Activated CD4-positive, alpha-beta memory T cell treated with anti-CD3 and anti-CD28 coated beads for 36 hours (primary cell): ENCODE measurements at regions of chr17 and their contacts with region 1.

Region 1: DNA sequence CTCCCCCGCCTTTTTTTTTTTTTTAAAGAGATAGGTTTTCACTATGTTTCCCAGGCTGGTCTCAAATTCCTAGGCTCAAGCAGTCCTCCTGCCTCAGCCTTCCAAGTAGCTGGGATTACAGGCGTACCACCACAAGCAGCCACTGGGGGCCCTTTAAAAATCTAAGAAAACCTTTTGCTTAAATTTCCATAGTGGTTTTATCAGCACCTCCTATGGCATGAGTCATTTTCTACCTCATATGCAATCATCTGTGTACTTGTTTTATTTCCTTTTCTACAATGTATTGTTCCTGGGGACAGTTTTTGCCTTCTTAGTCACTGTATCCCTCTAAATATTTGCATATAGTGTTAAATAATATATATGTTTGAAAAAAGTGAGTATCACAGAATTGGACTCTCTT is 29.2 kb downstream of the GNA13 start:
- DNase-seq: peak; percentile 75
- H3K4me3 Mint-ChIP-seq: peak overlapping the region; percentile 62
- H3K27ac Mint-ChIP-seq: peak overlapping the region; percentile 96
- H3K4me1 Mint-ChIP-seq: peaks cover 83% of the 10 kb centered on the region
- H3K27me3 Mint-ChIP-seq: no peaks in the 10 kb centered on the region

Region 2: GRCh38 chr17:64975329-64976087 is 51.8 kb before region 1 on chr17:
- CTCF ChIA-PET with region 1: interaction called, 3 read pairs
- POLR2A ChIA-PET with region 1: interaction called, 5 read pairs
- intact Hi-C with region 1: loop called (anchors 1 kb)
- DNase-seq: peak; percentile 97
- H3K4me3 Mint-ChIP-seq: peak overlapping the region; percentile 82
- H3K27ac Mint-ChIP-seq: peak overlapping the region; percentile 100
- H3K4me1 Mint-ChIP-seq: peaks cover 55% of the 10 kb centered on the region
- H3K27me3 Mint-ChIP-seq: no peaks in the 10 kb centered on the region

Region 3: DNA sequence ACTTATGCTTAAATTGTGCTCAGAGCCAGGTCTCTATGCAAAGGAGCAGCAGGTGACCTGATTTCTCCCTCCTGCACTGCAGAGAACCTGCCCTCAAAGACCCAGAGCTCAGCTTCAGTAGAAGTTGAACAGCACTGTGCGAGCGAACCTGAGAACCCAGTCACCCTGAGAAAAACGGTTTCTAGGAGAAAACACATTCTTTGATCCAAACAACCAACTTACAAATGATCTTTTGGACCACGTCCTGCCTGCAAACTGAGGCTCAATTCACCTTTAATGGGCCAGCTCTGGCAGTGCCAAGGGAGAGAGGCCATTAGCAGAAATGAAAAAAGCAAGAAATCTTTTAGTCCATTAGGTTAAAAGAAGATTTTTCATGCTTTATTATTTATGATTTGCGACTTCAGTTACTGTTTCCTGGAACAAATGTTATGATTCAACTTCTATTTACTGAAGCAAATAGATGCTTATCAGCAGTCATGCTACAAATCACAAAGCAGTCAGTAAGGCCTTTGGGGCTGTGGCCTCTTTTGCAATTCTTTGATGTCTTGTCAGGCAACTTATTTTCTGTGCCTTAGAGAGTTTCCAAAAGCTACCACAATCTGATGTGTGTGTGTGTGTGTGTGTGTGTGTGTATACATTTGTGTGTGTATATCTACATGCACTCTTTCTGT is 42.3 kb before region 1 on chr17:
- CTCF ChIA-PET with region 1: interaction called, 6 read pairs
- POLR2A ChIA-PET with region 1: interaction called, 10 read pairs
- intact Hi-C with region 1: loop called (anchors 1 kb)
- DNase-seq: peak; percentile 70
- H3K4me3 Mint-ChIP-seq: peak overlapping the region; percentile 75
- H3K27ac Mint-ChIP-seq: peak overlapping the region; percentile 97
- H3K4me1 Mint-ChIP-seq: peaks cover 48% of the 10 kb centered on the region
- H3K27me3 Mint-ChIP-seq: no peaks in the 10 kb centered on the region

Region 4: DNA sequence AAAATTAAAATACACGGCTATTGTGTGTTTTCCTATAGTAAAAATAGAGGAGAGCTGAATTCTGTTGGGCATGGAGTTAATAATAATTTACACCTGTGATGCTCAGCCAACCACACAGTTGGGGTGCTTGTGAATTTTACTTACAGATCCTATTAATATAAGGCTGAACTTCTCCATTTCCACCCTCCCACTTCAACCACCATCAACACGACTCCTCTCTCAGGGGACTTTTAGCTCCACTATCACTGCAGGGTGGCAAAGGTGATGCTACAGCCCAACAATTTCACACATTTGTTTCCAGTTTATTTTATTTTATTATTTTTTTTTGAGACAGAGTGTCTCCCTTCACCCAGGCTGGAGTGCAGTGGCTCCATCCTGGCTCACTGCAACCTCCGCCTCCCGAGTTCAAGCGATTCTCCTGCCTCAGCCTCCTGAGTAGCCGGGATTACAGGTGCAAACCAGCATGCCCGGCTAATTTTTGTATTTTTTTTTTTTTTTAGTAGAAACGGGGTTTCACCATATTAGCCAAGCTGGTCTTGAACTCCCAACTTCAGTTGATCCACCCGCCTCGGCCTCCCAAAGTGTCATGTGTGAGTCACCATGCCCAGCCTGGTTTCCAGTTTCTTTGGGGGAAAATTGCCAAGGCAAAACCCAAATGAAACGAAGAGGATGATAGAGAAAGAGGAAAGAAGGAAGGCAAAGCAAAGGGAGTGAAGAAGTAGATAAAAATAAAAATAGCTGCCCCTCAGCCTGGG is 28.7 kb before region 1 on chr17:
- CTCF ChIA-PET with region 1: no interaction called
- POLR2A ChIA-PET with region 1: no interaction called
- intact Hi-C with region 1: no loop called
- DNase-seq: no peak
- H3K4me3 Mint-ChIP-seq: no peak overlapping the region
- H3K27ac Mint-ChIP-seq: no peak overlapping the region
- H3K4me1 Mint-ChIP-seq: peaks cover 9% of the 10 kb centered on the region
- H3K27me3 Mint-ChIP-seq: no peaks in the 10 kb centered on the region

Region 5: DNA sequence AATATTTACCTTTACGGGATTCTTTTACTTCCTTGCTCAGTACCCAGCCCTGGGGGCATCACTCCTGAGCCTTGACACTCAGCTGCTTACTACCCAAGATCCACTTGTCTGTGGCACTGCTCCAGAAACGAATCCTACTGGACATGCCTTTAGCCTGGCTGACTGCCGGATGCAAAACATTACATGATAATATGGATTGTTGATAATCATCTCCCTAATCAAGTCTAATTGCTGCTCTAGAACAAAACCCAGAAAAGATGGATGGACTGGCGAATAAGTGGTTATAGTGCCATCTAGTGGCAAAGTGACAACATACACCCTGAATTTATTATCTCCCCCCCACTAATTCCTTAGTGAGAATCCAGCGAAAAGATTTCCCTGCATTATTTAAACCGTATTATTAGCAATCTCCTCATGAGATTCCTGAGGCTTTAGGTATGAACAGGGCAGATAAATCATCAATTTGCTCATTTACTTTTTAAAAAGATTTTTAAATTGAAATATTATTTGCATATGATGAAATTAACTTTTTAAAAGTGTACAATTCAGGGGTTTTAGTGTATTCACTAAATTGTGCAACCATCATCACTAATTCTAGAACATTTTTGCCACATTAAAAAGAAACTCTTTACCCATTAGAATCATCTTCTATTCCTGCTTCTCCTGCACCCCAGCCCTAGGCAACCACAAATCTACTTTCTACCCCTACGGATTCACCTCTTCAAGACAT is 171.5 kb after region 1 on chr17:
- CTCF ChIA-PET with region 1: no interaction called
- POLR2A ChIA-PET with region 1: no interaction called
- intact Hi-C with region 1: no loop called
- DNase-seq: no peak
- H3K4me3 Mint-ChIP-seq: no peak overlapping the region
- H3K27ac Mint-ChIP-seq: no peak overlapping the region
- H3K4me1 Mint-ChIP-seq: peaks cover 26% of the 10 kb centered on the region
- H3K27me3 Mint-ChIP-seq: peaks cover 2% of the 10 kb centered on the region